ENCODE measurements at regions of chr12 and their contacts with region 1.

Region 1: DNA sequence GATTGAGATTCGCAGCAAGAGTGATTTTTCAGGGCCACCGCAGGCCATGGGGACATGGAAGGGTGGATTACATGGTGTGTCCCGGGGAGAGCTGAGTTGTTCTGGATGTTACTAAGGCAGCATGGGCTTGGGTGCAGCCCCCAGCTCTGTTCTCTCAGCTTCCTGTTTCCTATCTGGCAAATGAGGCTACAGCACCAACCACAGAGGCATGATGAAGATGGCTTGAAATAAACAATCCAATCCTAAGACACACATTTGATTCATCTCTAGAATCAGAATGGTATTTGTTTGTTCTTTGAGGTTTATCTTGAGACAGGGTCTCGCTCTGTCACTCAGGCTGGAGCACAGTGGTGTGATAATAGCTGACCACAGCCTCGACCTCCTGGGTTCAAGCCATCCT is 21.6 kb downstream of the GLTP start:
- DNase-seq: no peak
- ATAC-seq: no peak
- H3K4me3 ChIP-seq: no peak overlapping the region
- H3K4me3 Mint-ChIP-seq: no peak overlapping the region
- H3K27ac ChIP-seq: no peak overlapping the region
- H3K27ac Mint-ChIP-seq: no peak overlapping the region
- H3K4me1 ChIP-seq: peaks cover 0 to 13% of the 10 kb centered on the region in 2 experiments
- H3K4me1 Mint-ChIP-seq: peaks cover 4 to 13% (median 7%) of the 10 kb centered on the region in 3 donors
- H3K27me3 ChIP-seq: no peaks in the 10 kb centered on the region
- H3K27me3 Mint-ChIP-seq: no peaks in the 10 kb centered on the region

Region 2: GRCh38 chr12:109697877-109698468 is 160.8 kb before region 1 on chr12:
- CTCF ChIA-PET with region 1: no interaction called
- POLR2A ChIA-PET with region 1: no interaction called
- DNase-seq: no peak
- ATAC-seq: no peak
- H3K4me3 ChIP-seq: no peak overlapping the region
- H3K4me3 Mint-ChIP-seq: no peak overlapping the region
- H3K27ac ChIP-seq: no peak overlapping the region
- H3K27ac Mint-ChIP-seq: peak overlapping the region in 1 of 2 donors; percentile 3
- H3K4me1 ChIP-seq: no peaks in the 10 kb centered on the region
- H3K4me1 Mint-ChIP-seq: no peaks in the 10 kb centered on the region
- H3K27me3 ChIP-seq: peaks cover 0 to 24% of the 10 kb centered on the region in 2 experiments
- H3K27me3 Mint-ChIP-seq: peaks cover 6 to 8% of the 10 kb centered on the region in 2 donors

Region 3: GRCh38 chr12:109870648-109871047 is 11.9 kb after region 1 on chr12:
- CTCF ChIA-PET with region 1: interaction called in 1 of 2 experiments, 10 read pairs
- POLR2A ChIA-PET with region 1: no interaction called
- DNase-seq: no peak
- ATAC-seq: no peak
- H3K4me3 ChIP-seq: no peak overlapping the region
- H3K4me3 Mint-ChIP-seq: no peak overlapping the region
- H3K27ac ChIP-seq: no peak overlapping the region
- H3K27ac Mint-ChIP-seq: no peak overlapping the region
- H3K4me1 ChIP-seq: peaks cover 0 to 7% of the 10 kb centered on the region in 2 experiments
- H3K4me1 Mint-ChIP-seq: peaks cover 16 to 34% (median 29%) of the 10 kb centered on the region in 3 donors
- H3K27me3 ChIP-seq: no peaks in the 10 kb centered on the region
- H3K27me3 Mint-ChIP-seq: no peaks in the 10 kb centered on the region

Region 4: DNA sequence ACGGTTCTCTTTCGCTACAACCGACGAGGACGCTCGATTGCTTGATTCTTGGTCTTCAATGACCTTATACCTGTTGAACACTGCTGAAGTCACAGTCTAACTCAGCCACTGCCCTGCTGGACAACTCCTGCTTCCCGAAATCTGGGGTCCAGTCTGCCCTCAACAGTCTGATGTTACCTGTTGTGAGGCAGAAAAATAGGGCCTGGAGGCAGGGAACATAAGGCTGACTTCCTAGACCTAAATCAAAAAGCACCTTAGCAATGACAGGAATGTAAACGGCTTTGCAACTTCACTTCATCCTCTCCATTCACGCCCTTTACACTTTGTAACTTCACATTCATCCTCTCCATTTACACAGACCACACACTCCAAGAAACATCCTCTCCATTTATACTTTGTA is 22.2 kb after region 1 on chr12:
- CTCF ChIA-PET with region 1: interaction called, 5 to 11 read pairs
- POLR2A ChIA-PET with region 1: interaction called in 1 of 2 experiments, 4 read pairs
- DNase-seq: no peak
- ATAC-seq: no peak
- H3K4me3 ChIP-seq: peak overlapping the region; percentile 51 to 60
- H3K4me3 Mint-ChIP-seq: peak overlapping the region; percentile 80 to 90 (median 83)
- H3K27ac ChIP-seq: peak overlapping the region; percentile 69
- H3K27ac Mint-ChIP-seq: peak overlapping the region; percentile 84 to 95
- H3K4me1 ChIP-seq: peaks cover 16 to 37% of the 10 kb centered on the region in 2 experiments
- H3K4me1 Mint-ChIP-seq: peaks cover 44 to 48% (median 46%) of the 10 kb centered on the region in 3 donors
- H3K27me3 ChIP-seq: no peaks in the 10 kb centered on the region
- H3K27me3 Mint-ChIP-seq: no peaks in the 10 kb centered on the region